ENCODE measurements at regions of chr1 and their contacts with region 1.

Region 1: DNA sequence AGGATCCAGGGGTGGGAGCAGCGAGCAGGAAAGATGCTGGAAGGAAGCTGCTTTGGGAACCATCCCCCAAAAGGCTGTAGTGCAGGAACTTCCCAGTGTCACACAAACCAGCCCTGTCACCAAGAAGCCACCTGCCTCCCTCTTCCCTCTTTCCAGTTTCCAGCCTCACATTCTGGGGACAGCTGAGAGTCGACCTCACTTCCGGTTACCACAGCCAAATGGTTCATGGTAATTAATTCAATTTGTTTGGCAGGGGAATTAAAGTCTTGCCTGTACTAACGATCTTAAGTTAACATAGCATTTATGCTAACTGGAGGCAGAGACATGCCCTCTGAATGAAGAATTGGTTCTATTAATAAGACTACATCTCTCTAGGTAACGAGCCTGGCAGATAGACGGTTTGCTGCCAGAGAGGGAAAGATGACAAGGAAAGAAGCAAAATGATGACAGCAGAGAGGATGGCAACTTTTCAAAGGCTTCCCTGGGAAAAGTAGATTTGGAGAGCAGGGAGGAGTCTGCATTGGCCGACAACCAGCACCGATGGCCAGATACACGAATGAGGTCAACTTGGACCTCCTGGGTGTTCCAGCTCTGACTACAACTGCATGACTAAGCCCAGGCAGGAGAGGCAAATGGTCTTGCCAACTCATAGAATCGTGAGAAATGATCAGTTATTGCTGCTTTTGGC is 64.1 kb downstream of the TMCO4 start:
- DNase-seq: no peak
- H3K4me3 ChIP-seq: no peak overlapping the region
- H3K27ac ChIP-seq: peak overlapping the region; percentile 31 to 34
- H3K4me1 ChIP-seq: no peaks in the 10 kb centered on the region
- H3K27me3 ChIP-seq: no peaks in the 10 kb centered on the region
- CTCF ChIP-seq: no peak
- POLR2A ChIP-seq: no peak

Region 2: GRCh38 chr1:19315378-19316198 is 420.0 kb before region 1 on chr1:
- intact Hi-C with region 1: no loop called
- DNase-seq: no peak
- H3K4me3 ChIP-seq: no peak overlapping the region
- H3K27ac ChIP-seq: no peak overlapping the region
- H3K4me1 ChIP-seq: peaks cover 3% of the 10 kb centered on the region
- H3K27me3 ChIP-seq: no peaks in the 10 kb centered on the region
- CTCF ChIP-seq: no peak
- POLR2A ChIP-seq: no peak

Region 3: GRCh38 chr1:19882111-19883071 is 146.8 kb after region 1 on chr1 and contains the start of gene OTUD3:
- intact Hi-C with region 1: loop called (anchors 10 kb)
- DNase-seq: peak; percentile 98
- H3K4me3 ChIP-seq: peak within 1 kb of the TSS; percentile 67 to 96
- H3K27ac ChIP-seq: peak within 1 kb of the TSS; percentile 87 to 93
- H3K4me1 ChIP-seq: no peaks in the 10 kb centered on the region
- H3K27me3 ChIP-seq: no peaks in the 10 kb centered on the region
- CTCF ChIP-seq: peak; percentile 90 to 99 (median 97)
- POLR2A ChIP-seq: peak; percentile 91
- total RNA-seq, gene OTUD3: 5.3 to 16.5 TPM

Region 4: DNA sequence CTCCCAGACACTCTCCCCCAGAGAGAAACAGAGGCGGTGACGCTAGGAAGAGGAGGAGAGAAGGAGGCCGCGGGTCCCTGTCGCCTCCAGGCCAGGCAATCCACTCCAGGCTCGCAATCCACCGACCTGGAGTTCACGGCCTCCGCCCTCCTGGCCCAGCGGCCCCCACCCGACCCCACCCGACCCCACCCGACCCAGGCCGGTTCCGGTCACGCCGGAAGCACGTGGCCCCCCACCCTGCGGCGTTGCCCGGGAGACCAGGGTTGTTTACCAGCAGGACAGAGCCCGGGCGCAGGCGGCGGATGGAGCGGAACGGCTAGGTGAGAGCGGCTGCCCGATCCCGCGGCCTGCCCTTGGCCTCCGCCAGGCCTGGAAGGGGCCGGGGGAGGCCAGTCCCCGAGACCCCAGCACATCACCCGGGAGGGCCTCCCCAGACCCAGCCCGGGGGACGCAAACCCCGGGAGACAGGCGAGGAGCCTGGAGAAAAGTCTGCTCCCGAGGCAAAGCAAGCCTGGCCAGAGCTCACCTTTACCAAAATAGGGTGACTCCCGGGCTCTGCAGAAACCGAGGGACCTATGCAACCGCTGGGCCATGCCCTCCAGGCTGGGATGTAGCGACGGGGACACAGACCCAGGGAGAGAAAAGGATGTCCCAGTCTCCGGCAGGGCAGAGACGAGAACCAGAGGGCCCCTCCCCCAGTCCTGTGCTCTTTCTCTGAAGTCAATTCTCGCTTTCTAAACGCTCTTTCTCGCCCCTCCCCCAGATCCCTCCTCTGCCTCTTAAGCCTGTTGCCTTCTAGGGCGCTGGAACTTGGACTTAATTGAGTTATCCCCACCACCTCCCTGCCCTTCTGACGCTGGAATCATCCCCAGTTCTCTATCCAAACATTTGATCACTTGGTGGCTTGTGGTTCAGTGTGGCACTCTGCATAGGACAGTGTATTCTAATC is 450.5 kb after region 1 on chr1 and contains the starts of genes PLA2G2C and UBXN10:
- intact Hi-C with region 1: loop called (anchors 10 kb)
- DNase-seq: no peak
- H3K4me3 ChIP-seq: peak within 1 kb of the TSS; percentile 25 to 33
- H3K27ac ChIP-seq: peak within 1 kb of the TSS; percentile 61 to 68
- H3K4me1 ChIP-seq: no peaks in the 10 kb centered on the region
- H3K27me3 ChIP-seq: no peaks in the 10 kb centered on the region
- CTCF ChIP-seq: no peak
- POLR2A ChIP-seq: no peak
- total RNA-seq, gene PLA2G2C: 0.23 TPM in 1 of 2 donors, not detected in the other
- total RNA-seq, gene UBXN10: 1.6 to 10.6 TPM

Measured in prostate gland (tissue), 2 donors.